ENCODE measurements at regions of chr9 and their contacts with region 1.

Region 1: GRCh38 chr9:96854073-96854876 is at the start of gene ZNF782:
- DNase-seq: peak; percentile 86 to 99 (median 93)

Region 2: GRCh38 chr9:96758845-96759673 is 95.2 kb before region 1 on chr9:
- intact Hi-C with region 1: no loop called
- DNase-seq: no peak

Region 3: GRCh38 chr9:96818535-96818934 is 35.7 kb before region 1 on chr9:
- intact Hi-C with region 1: no loop called
- DNase-seq: no peak

Region 4: DNA sequence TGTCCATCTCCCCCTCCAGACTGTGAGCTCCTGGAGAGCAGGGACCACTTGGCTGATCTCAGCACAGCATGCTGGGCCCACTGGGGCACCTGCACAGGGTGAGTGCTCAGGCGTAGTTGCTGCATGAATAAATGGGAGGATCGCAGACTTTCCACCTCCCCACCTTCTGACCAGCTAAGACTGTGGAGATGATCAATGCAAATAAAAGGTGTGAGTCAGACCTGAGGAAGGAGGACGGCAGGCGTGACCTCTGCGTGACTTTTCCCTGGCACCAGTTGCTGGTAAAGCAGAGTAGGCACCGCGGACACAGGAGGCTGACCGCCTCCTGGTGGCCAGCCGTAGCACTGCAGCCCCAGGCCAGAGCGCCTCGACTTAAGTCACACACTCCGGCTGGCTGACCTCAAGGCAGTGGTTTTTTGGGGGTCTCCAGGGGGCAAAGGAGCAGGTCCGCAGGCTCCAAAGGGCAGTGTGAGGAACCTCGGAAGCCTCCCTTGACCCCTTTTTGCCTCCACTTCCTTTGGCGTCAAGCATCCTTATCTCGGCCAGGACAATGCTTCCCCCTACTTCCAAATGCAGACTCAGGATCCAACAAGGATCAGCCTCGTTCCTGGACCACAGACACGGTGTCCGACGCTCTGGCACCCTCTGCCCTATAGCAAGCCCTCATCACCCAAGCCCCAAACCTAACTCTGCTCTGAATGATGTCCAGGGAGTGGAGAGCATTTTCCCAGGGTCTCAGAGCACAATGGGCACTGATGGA is 544.9 kb after region 1 on chr9:
- intact Hi-C with region 1: loop called (anchors 5 kb)
- DNase-seq: peak in 7 of 10 donors; percentile 30 to 93 (median 62)

Region 5: DNA sequence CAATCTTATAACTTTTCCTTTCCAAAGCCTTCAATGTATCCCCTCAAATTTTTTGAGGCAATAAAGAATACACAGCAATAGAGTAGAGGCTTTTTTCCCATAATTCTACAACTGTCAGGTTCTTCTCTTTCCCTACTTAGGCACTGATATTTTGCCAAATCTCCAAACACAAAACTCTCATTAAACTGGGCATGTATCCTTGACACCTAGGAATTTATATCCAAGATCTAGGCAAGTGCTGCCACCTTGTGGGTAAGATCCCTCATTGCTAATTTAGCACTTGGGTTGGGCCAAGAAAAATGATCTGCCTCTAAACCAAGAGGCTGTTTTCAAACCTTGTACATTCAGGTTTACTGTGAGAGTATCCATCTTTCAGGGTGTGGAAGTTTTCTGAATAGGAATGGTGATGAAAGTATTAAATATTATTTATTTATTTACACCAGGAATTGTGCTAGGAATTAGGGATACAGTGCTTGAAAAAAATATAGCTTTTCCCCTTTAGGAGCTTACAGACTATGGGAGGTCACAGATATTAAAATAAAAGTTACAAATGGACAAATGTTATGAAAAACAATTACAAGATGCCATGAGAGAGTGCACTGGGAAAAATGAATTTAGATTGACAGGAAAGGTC is 761.3 kb after region 1 on chr9:
- intact Hi-C with region 1: loop called (anchors 10 kb)
- DNase-seq: peak in 5 of 10 donors; percentile 63 to 80 (median 68)

Measured in posterior cingulate gyrus (tissue), 11 donors.